Naive thymus-derived CD4-positive, alpha-beta T cell (primary cell): ENCODE measurements at regions of chr12 and their contacts with region 1.

Region 1: DNA sequence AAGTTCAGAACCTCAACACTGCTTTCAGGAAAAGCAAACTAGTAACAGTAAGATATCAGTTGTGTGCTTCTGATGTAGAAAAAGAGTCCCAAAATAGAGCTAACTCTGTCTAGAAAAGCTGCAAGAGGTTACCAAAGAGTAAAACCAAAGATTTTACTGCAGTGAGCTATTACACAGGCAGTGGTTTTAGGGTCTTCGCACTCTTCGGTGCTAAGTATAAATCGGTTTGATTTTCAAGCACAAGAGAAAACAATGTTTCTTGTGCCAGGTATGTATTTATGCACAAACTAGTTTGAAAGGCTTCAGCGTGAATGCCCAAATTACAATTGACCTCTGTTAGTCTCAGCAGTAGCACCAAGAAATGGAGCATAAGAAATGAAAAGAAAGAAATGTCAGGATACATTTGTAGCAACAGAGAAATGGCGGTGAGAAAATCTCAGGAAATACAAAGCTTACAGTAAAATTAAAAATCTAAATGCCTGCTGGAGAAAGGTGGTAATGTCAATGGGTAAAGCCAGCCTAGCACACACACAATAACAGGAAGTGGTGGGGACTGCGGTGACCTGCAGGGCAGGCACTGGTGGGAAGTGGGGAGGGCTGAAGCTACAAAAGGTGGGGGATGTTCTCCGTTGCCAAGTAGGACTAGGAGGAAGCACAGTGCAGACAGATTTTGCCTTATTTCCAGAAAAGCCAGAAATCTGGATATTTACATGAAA is 18.0 kb upstream of the DYRK2 start:
- DNase-seq: peak; percentile 51 to 97 (median 96)
- ATAC-seq: peak; percentile 100
- H3K4me3 ChIP-seq: peak overlapping the region; percentile 20
- H3K4me3 Mint-ChIP-seq: peak overlapping the region; percentile 21 to 89 (median 78)
- H3K27ac ChIP-seq: peak overlapping the region; percentile 79
- H3K27ac Mint-ChIP-seq: peak overlapping the region; percentile 91 to 100 (median 96)
- H3K4me1 ChIP-seq: peaks cover 83 to 85% of the 10 kb centered on the region in 2 donors
- H3K4me1 Mint-ChIP-seq: peaks cover 42 to 98% (median 93%) of the 10 kb centered on the region in 7 donors
- H3K27me3 ChIP-seq: no peaks in the 10 kb centered on the region
- H3K27me3 Mint-ChIP-seq: peaks cover 0 to 12% (median 0%) of the 10 kb centered on the region in 5 donors

Region 2: GRCh38 chr12:67441736-67442346 is 188.7 kb before region 1 on chr12:
- CTCF ChIA-PET with region 1: interaction called, 3 read pairs
- POLR2A ChIA-PET with region 1: interaction called, 6 read pairs
- intact Hi-C with region 1: loop called (anchors 1 to 5 kb)
- DNase-seq: peak; percentile 50 to 76 (median 72)
- ATAC-seq: peak; percentile 94
- H3K4me3 ChIP-seq: no peak overlapping the region
- H3K4me3 Mint-ChIP-seq: peak overlapping the region in 9 of 10 donors; percentile 29 to 78 (median 59)
- H3K27ac ChIP-seq: no peak overlapping the region
- H3K27ac Mint-ChIP-seq: peak overlapping the region in 8 of 9 donors; percentile 17 to 93 (median 53)
- H3K4me1 ChIP-seq: peaks cover 5 to 7% of the 10 kb centered on the region in 2 donors
- H3K4me1 Mint-ChIP-seq: peaks cover 8 to 38% (median 34%) of the 10 kb centered on the region in 7 donors
- H3K27me3 ChIP-seq: no peaks in the 10 kb centered on the region
- H3K27me3 Mint-ChIP-seq: peaks cover 0 to 8% (median 0%) of the 10 kb centered on the region in 5 donors

Region 3: DNA sequence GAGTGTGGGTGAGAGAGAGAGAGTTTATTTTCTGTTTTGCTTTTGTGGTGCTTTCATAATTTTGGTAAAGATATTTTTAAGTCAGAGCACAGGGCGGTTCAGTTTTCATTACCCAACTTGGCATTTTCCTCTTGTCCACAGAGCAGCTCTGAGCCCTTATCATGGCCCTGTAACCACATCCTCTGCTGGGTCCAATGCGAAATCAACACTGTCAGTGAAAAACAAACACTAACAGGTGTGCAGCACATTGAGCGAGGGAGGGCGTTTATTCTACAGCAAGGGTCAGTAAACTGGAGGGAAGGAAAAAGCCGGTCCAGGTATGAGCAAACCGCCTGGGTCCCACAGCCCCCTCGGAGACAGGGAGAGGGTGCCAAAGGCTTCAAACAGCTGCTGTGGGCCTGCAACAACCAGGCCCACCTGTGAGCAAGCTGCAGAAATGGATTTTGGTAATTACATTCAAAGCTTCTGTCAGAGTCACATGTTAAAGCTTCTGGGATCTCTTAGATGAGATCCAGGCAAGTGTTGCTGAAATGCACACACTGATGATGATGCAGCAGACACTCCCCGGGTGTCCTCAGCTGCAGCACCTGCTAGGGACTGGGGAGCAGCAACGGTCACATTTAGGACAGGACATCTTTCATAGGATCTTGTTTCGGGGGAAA is 114.7 kb before region 1 on chr12:
- CTCF ChIA-PET with region 1: no interaction called
- POLR2A ChIA-PET with region 1: interaction called, 8 read pairs
- intact Hi-C with region 1: loop called (anchors 1 to 5 kb)
- DNase-seq: peak in 8 of 9 donors; percentile 11 to 70 (median 50)
- ATAC-seq: peak; percentile 82
- H3K4me3 ChIP-seq: peak overlapping the region; percentile 37
- H3K4me3 Mint-ChIP-seq: peak overlapping the region; percentile 52 to 81 (median 72)
- H3K27ac ChIP-seq: no peak overlapping the region
- H3K27ac Mint-ChIP-seq: peak overlapping the region; percentile 40 to 90 (median 79)
- H3K4me1 ChIP-seq: peaks cover 34 to 39% of the 10 kb centered on the region in 2 donors
- H3K4me1 Mint-ChIP-seq: peaks cover 36 to 65% (median 54%) of the 10 kb centered on the region in 7 donors
- H3K27me3 ChIP-seq: no peaks in the 10 kb centered on the region
- H3K27me3 Mint-ChIP-seq: peaks cover 0 to 15% (median 0%) of the 10 kb centered on the region in 5 donors

Region 4: GRCh38 chr12:67674417-67674816 is 43.9 kb after region 1 on chr12:
- CTCF ChIA-PET with region 1: no interaction called
- POLR2A ChIA-PET with region 1: no interaction called
- intact Hi-C with region 1: no loop called
- DNase-seq: no peak
- ATAC-seq: no peak
- H3K4me3 ChIP-seq: no peak overlapping the region
- H3K4me3 Mint-ChIP-seq: no peak overlapping the region
- H3K27ac ChIP-seq: no peak overlapping the region
- H3K27ac Mint-ChIP-seq: peak overlapping the region in 1 of 9 donors; percentile 22
- H3K4me1 ChIP-seq: peaks cover 7 to 10% of the 10 kb centered on the region in 2 donors
- H3K4me1 Mint-ChIP-seq: peaks cover 13 to 48% (median 39%) of the 10 kb centered on the region in 7 donors
- H3K27me3 ChIP-seq: no peaks in the 10 kb centered on the region
- H3K27me3 Mint-ChIP-seq: no peaks in the 10 kb centered on the region

Region 5: DNA sequence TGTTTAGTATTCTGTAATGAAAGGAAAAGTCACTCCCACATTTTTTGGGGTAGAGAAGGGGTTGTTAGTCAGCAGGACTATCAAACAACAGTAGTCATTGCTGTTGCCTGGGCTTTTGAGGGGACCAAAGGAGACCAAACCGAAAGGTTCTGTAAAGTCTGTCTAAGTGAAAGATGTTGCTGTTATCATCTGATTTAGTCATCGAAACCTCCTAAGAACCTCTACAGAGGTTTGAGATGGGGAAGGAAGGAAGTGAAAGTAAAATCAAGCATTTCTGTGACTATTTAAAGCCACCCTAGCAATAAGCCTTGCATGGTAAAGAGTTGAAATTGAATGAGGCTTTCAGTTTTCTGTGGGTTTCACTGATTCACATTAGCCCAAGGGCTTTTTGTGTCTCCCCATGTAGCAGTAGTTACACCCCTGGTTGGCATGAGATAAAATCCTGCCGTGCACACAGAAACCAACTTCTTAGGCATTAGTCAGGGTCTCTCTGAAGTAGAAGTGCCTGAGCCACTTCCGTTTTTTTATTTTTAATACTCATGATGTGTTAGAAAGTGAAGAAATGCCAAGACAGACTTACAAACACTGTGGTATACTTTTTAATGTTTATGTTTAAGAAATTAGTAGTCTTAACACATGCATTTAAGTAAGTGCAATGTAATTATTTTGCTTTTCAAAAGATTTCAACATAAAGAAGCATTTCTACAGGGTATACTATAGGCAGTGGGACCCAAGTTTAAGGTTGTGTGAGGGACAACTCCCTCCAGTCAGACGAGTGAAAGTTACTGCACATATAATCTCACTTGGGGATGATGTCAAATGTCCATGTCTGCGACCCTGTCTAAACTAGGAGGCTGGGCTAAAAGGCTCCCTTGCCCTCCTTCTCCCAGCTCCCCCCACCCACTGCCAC is 68.4 kb after region 1 on chr12:
- CTCF ChIA-PET with region 1: interaction called, 3 read pairs
- POLR2A ChIA-PET with region 1: no interaction called
- intact Hi-C with region 1: loop called in 1 of 2 experiments (anchors 1 kb)
- DNase-seq: peak in 8 of 9 donors; percentile 26 to 55 (median 44)
- ATAC-seq: peak; percentile 82
- H3K4me3 ChIP-seq: peak overlapping the region; percentile 39
- H3K4me3 Mint-ChIP-seq: peak overlapping the region; percentile 71 to 86 (median 82)
- H3K27ac ChIP-seq: peak overlapping the region; percentile 62
- H3K27ac Mint-ChIP-seq: peak overlapping the region; percentile 58 to 91 (median 73)
- H3K4me1 ChIP-seq: peaks cover 20 to 24% of the 10 kb centered on the region in 2 donors
- H3K4me1 Mint-ChIP-seq: peaks cover 28 to 74% (median 60%) of the 10 kb centered on the region in 7 donors
- H3K27me3 ChIP-seq: no peaks in the 10 kb centered on the region
- H3K27me3 Mint-ChIP-seq: peaks cover 0 to 58% (median 0%) of the 10 kb centered on the region in 5 donors

Region 6: DNA sequence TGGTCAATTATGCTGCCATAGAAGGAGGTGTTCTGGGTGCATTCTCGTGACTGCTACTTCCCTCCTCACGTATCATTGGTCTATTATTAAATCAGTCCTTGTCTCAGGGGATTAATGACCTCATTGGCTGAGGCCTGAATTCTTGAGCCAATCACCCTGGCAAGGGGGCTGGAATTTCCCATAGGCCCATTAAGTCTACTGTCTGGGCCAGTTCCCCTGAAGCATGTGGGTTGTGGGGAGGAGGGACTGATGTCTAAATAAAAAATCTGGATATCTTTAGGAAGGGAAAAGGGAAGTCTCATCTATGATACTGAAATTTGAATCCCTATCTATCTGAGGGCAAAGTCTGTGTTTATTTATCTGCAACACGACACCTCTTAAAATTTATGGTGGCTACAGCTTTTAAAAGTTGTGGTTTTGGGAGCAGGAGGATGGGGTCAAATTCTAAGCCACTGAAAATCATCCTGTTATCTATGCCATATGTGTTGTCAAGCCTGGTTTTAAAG is 89.9 kb after region 1 on chr12:
- CTCF ChIA-PET with region 1: no interaction called
- POLR2A ChIA-PET with region 1: no interaction called
- intact Hi-C with region 1: no loop called
- DNase-seq: no peak
- ATAC-seq: no peak
- H3K4me3 ChIP-seq: no peak overlapping the region
- H3K4me3 Mint-ChIP-seq: no peak overlapping the region
- H3K27ac ChIP-seq: no peak overlapping the region
- H3K27ac Mint-ChIP-seq: no peak overlapping the region
- H3K4me1 ChIP-seq: no peaks in the 10 kb centered on the region
- H3K4me1 Mint-ChIP-seq: peaks cover 0 to 4% (median 0%) of the 10 kb centered on the region in 7 donors
- H3K27me3 ChIP-seq: no peaks in the 10 kb centered on the region
- H3K27me3 Mint-ChIP-seq: peaks cover 0 to 4% (median 0%) of the 10 kb centered on the region in 5 donors